ENCODE measurements at regions of chrX and their contacts with region 1.

Region 1: DNA sequence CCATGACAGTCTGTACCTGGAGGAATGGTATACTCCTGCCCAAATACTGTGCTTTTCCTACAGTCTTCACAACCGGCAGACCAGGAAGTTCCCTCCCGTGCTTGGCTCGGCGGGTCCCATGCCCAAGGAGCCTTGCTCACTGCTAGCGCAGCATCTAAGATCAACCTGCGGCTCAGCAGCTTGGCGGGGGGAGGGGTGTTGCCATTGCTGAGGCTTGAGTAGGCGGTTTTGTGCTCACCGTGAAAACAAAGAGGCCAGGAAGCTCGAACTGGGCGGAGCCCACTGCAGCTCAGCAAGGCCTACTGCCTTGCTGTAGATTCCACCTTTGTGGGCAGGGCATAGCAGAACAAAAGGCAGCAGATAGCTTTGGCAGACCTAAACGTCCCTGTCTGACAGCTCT is 152.7 kb downstream of the TEX11 start:
- DNase-seq: peak; percentile 83
- H3K4me3 Mint-ChIP-seq: peak overlapping the region; percentile 20
- H3K27ac Mint-ChIP-seq: no peak overlapping the region
- H3K4me1 Mint-ChIP-seq: peaks cover 22% of the 10 kb centered on the region
- H3K27me3 Mint-ChIP-seq: no peaks in the 10 kb centered on the region

Region 2: DNA sequence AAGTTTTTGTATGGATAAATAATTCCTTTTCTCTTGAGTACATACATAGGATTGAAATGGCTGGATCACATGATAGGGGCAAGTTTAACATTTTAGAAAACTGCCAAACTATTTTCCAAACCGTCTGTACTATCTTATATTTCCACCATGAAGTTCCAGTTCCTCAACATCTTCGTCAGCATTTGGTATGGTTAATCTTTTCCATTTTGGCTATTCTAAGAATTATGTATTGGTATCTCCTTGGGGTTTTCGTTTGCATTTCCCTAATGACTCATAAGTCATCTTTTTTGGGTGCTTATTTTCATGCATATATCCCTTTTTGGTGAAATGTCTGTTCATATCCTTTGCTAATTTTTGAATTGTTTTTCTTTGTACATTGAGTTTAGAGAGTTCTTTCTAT is 83.5 kb before region 1 on chrX:
- CTCF ChIA-PET with region 1: interaction called, 3 read pairs
- POLR2A ChIA-PET with region 1: no interaction called
- intact Hi-C with region 1: loop called (anchors 5 kb)
- DNase-seq: no peak
- H3K4me3 Mint-ChIP-seq: no peak overlapping the region
- H3K27ac Mint-ChIP-seq: peak overlapping the region; percentile 13
- H3K4me1 Mint-ChIP-seq: peaks cover 14% of the 10 kb centered on the region
- H3K27me3 Mint-ChIP-seq: no peaks in the 10 kb centered on the region

Region 3: DNA sequence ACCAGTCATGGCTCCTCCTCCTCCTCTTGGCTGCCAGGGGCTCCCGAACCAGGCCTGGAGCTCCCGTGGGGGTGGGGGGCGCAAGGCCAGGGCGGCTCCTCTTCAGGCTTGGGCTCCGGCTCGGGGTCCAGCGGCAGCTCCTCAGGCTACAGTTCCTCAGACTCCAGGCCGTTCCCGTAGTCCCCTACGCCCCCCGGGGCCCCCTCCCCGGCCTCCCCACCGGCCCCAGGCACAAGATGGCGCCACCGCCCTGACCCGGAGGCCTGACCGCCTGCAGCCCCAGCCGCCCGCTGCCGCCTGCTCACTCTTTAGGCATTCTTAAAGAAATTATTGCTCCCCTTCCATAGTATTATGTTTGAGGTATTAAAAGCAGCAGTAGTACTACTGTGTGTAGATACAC is 664.8 kb after region 1 on chrX:
- CTCF ChIA-PET with region 1: no interaction called
- POLR2A ChIA-PET with region 1: no interaction called
- intact Hi-C with region 1: no loop called
- DNase-seq: no peak
- H3K4me3 Mint-ChIP-seq: no peak overlapping the region
- H3K27ac Mint-ChIP-seq: no peak overlapping the region
- H3K4me1 Mint-ChIP-seq: no peaks in the 10 kb centered on the region
- H3K27me3 Mint-ChIP-seq: no peaks in the 10 kb centered on the region